ENCODE measurements at regions of chr15 and their contacts with region 1.

Region 1: DNA sequence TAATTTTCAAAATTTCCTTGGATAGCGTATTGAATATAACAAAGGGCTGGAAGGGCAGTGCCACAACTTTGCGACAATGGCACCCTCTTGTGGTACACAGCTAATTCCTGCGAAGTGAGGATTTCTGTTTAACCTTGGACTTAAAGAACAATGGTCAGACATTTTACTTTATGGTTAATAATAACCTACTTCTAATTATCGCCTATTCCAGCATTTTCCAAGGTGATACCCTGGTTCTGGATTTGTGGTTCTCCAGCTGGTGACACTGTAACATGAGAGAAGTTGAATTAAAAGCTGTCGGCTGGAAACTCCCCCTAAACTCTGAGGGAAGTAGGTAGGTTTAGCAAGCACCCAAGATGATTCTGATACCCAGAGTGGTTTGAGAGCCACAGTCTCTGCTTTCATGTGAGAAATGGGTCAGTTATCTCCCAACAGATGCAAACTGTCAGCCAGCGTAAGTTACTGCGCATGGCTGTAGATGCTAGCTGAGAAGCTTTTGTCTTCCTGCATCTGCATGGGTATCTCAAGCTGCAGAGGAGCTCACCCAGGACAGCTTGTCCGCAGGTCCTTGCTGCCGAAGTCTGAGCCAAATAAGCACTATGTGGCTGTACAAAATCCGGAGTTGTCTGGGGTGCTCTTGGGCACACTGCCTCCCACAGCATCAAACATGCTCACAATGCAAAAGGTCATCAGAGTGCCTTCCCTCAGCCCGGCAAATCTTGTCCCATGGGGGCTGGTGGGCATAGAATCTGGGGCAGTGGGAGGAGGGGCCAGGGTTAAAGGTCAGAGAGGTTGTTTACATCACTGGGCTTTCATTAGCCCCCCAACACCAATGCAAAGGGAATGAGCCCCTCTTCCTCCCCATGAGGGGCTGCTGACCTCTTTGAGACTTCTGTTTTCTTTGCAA is 6.6 kb upstream of the CHSY1 start:
- DNase-seq: peak; percentile 68
- ATAC-seq: no peak
- H3K4me3 Mint-ChIP-seq: no peak overlapping the region
- H3K27ac Mint-ChIP-seq: no peak overlapping the region
- H3K4me1 Mint-ChIP-seq: peaks cover 23% of the 10 kb centered on the region
- H3K27me3 Mint-ChIP-seq: peaks cover 7% of the 10 kb centered on the region
- CTCF ChIP-seq: peak; percentile 94

Region 2: GRCh38 chr15:101014921-101015841 is 243.3 kb before region 1 on chr15:
- CTCF ChIA-PET with region 1: interaction called, 85 read pairs
- POLR2A ChIA-PET with region 1: no interaction called
- intact Hi-C with region 1: loop called (anchors 2 kb)
- DNase-seq: peak; percentile 79
- ATAC-seq: peak; percentile 66
- H3K4me3 Mint-ChIP-seq: no peak overlapping the region
- H3K27ac Mint-ChIP-seq: no peak overlapping the region
- H3K4me1 Mint-ChIP-seq: no peaks in the 10 kb centered on the region
- H3K27me3 Mint-ChIP-seq: peaks cover 2% of the 10 kb centered on the region
- CTCF ChIP-seq: peak; percentile 94

Region 3: DNA sequence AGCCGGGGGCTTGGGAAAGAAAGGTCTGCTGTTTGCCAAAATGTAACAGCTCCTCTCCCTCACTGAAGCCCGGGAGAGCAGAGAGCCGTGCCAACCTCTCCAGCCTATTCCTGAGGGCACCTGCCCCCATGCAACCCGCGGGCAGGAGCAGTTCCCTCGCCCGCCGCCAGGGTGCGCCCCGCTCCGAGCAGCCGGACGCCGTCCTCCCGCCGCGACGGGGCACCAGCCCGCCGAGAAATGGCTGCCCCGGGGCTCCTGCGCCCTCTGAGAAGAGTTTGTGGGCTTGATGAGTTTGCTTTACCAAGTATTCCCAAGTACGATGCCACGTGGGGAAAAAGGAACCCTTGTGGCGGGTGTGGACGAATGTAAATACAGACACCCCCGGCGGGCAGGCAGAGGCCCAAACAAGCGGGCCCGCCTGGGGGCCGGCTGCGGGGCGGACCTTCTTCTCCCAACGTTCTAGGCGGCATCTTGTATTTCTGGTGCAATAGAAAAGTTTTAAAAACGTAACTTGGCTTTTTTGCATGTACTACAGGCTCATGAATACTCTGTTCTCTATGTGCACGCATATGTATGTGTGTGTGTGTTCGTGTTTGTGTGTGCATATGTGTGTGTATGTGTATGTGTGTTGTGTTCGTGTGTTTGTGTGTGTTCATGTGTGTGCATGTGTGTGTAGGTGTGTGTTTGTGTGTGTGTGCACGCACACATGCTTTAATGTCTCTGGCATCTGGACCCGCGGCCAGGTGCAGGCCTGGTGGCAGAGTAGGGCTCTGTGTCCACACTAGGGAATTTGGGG is 169.5 kb before region 1 on chr15:
- CTCF ChIA-PET with region 1: interaction called, 82 read pairs
- POLR2A ChIA-PET with region 1: no interaction called
- intact Hi-C with region 1: loop called (anchors 2 kb)
- DNase-seq: peak; percentile 83
- ATAC-seq: peak; percentile 97
- H3K4me3 Mint-ChIP-seq: no peak overlapping the region
- H3K27ac Mint-ChIP-seq: no peak overlapping the region
- H3K4me1 Mint-ChIP-seq: peaks cover 8% of the 10 kb centered on the region
- H3K27me3 Mint-ChIP-seq: no peaks in the 10 kb centered on the region
- CTCF ChIP-seq: peak; percentile 99

Region 4: GRCh38 chr15:101242160-101242998 is 16.1 kb before region 1 on chr15:
- CTCF ChIA-PET with region 1: interaction called, 19 read pairs
- POLR2A ChIA-PET with region 1: interaction called, 28 read pairs
- intact Hi-C with region 1: no loop called
- DNase-seq: peak; percentile 82
- ATAC-seq: peak; percentile 76
- H3K4me3 Mint-ChIP-seq: peak overlapping the region; percentile 37
- H3K27ac Mint-ChIP-seq: peak overlapping the region; percentile 85
- H3K4me1 Mint-ChIP-seq: peaks cover 87% of the 10 kb centered on the region
- H3K27me3 Mint-ChIP-seq: no peaks in the 10 kb centered on the region
- CTCF ChIP-seq: no peak

Region 5: DNA sequence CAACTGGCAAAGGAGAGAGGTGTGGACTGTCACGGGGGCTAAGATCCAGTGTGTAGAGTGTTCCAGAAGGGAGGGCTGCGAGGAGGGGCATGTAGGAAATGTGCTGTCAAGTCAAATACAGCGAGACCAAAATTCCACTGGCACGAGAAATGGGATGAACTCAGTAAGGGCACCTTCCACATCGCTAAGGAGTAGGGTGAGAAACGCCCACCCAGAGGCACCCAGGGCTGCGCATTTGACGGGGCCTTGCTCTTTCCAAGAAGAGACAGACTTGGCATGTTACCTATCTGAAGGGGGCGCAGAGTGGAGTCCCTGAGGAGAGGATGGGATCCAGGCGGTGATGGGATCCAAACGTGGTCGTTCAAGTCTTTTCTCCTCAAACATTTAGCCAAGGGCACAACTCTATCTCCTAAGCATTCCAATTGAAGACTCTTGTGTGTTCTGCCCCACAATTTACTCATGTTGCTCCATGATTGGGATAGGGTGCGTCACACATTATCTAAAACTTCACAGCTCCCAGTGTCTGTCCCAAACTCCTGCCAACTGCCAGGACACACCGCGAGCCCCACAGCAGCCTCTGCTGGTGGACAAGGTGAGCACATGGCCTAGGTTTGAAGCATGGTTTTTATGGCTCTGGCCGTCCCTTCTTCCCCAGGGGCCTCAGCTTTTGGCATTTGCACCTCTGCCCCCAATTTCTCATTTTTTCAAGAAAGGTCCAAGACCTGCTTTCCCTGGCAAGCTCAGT is 11.2 kb after region 1 on chr15:
- CTCF ChIA-PET with region 1: interaction called, 12 read pairs
- POLR2A ChIA-PET with region 1: interaction called, 3 read pairs
- intact Hi-C with region 1: no loop called
- DNase-seq: no peak
- ATAC-seq: no peak
- H3K4me3 Mint-ChIP-seq: no peak overlapping the region
- H3K27ac Mint-ChIP-seq: peak overlapping the region; percentile 32
- H3K4me1 Mint-ChIP-seq: peaks cover under 1% of the 10 kb centered on the region
- H3K27me3 Mint-ChIP-seq: no peaks in the 10 kb centered on the region
- CTCF ChIP-seq: no peak

Region 6: DNA sequence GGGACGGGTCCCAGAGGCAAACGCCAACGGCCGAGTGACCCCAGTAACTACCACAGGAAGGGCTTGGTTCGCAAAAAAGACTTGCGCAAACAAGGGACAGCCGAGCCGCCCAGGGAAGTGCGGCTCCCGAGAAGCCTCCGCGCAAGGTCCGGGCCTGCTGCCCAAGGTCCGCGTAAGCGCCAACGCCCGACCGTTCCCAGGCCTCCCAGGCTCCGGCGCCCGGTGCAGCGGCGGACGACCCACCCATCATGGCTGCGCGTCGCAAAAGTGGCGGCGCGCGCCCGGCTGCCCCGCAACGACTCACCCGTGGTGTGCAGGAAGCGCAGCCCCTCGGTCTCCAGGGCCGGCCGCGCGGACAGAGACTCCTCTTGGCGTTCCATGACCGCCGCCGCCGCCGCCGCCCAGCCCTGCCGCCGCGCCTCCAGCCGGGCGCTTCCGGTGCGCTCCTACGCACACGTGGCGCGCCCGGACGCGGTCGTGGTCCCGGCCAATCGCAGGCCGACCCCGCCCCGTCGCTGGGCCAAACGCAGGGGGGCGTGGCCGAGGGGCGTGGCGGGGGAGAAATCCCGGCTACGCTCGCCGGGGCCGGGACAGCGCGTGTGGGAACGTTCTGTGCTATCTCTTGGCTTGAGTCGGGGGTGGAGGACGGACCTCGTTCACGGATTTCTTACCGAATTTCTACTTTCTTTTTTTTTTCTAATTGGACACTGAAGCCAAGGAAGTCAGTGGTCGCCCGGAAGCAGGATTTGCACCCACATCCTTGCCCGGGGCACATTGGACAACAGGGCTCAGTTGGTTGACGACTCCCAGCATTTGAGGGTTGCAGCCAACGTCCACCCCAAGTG is 18.8 kb after region 1 on chr15 and contains the start of gene SELENOS:
- CTCF ChIA-PET with region 1: interaction called, 10 read pairs
- POLR2A ChIA-PET with region 1: interaction called, 3 read pairs
- intact Hi-C with region 1: no loop called
- DNase-seq: peak; percentile 88
- ATAC-seq: peak; percentile 93
- H3K4me3 Mint-ChIP-seq: peak within 1 kb of the TSS; percentile 97
- H3K27ac Mint-ChIP-seq: peak within 1 kb of the TSS; percentile 86
- H3K4me1 Mint-ChIP-seq: peaks cover 25% of the 10 kb centered on the region
- H3K27me3 Mint-ChIP-seq: no peaks in the 10 kb centered on the region
- CTCF ChIP-seq: peak; percentile 14
- total RNA-seq, gene SELENOS: 18.8 to 21.6 TPM

Measured in activated CD8-positive, alpha-beta T cell treated with anti-CD3 and anti-CD28 coated beads for 36 hours (primary cell).